Caco-2 (cell line): ENCODE measurements at regions of chr2 and their contacts with region 1.

Region 1: GRCh38 chr2:144924827-144925226 is 404.9 kb upstream of the ZEB2 start:
- DNase-seq: no peak
- H3K4me3 ChIP-seq: no peak overlapping the region
- H3K4me3 Mint-ChIP-seq: no peak overlapping the region
- H3K27ac Mint-ChIP-seq: no peak overlapping the region
- H3K4me1 ChIP-seq: no peaks in the 10 kb centered on the region
- H3K4me1 Mint-ChIP-seq: no peaks in the 10 kb centered on the region
- H3K27me3 ChIP-seq: no peaks in the 10 kb centered on the region
- H3K27me3 Mint-ChIP-seq: peaks cover 4% of the 10 kb centered on the region
- CTCF ChIP-seq: no peak

Region 2: GRCh38 chr2:143499061-143499460 is 1425.8 kb before region 1 on chr2:
- CTCF ChIA-PET with region 1: no interaction called
- POLR2A ChIA-PET with region 1: no interaction called
- intact Hi-C with region 1: no loop called
- DNase-seq: no peak
- H3K4me3 ChIP-seq: no peak overlapping the region
- H3K4me3 Mint-ChIP-seq: no peak overlapping the region
- H3K27ac Mint-ChIP-seq: no peak overlapping the region
- H3K4me1 ChIP-seq: no peaks in the 10 kb centered on the region
- H3K4me1 Mint-ChIP-seq: no peaks in the 10 kb centered on the region
- H3K27me3 ChIP-seq: no peaks in the 10 kb centered on the region
- H3K27me3 Mint-ChIP-seq: peaks cover 6% of the 10 kb centered on the region
- CTCF ChIP-seq: no peak

Region 3: GRCh38 chr2:145136702-145137101 is 211.9 kb after region 1 on chr2:
- CTCF ChIA-PET with region 1: no interaction called
- POLR2A ChIA-PET with region 1: no interaction called
- intact Hi-C with region 1: no loop called
- DNase-seq: no peak
- H3K4me3 ChIP-seq: no peak overlapping the region
- H3K4me3 Mint-ChIP-seq: no peak overlapping the region
- H3K27ac Mint-ChIP-seq: no peak overlapping the region
- H3K4me1 ChIP-seq: no peaks in the 10 kb centered on the region
- H3K4me1 Mint-ChIP-seq: no peaks in the 10 kb centered on the region
- H3K27me3 ChIP-seq: no peaks in the 10 kb centered on the region
- H3K27me3 Mint-ChIP-seq: no peaks in the 10 kb centered on the region
- CTCF ChIP-seq: no peak

Region 4: GRCh38 chr2:145379934-145380333 is 455.1 kb after region 1 on chr2:
- CTCF ChIA-PET with region 1: interaction called, 11 read pairs
- POLR2A ChIA-PET with region 1: no interaction called
- intact Hi-C with region 1: no loop called
- DNase-seq: no peak
- H3K4me3 ChIP-seq: no peak overlapping the region
- H3K4me3 Mint-ChIP-seq: no peak overlapping the region
- H3K27ac Mint-ChIP-seq: no peak overlapping the region
- H3K4me1 ChIP-seq: no peaks in the 10 kb centered on the region
- H3K4me1 Mint-ChIP-seq: no peaks in the 10 kb centered on the region
- H3K27me3 ChIP-seq: no peaks in the 10 kb centered on the region
- H3K27me3 Mint-ChIP-seq: no peaks in the 10 kb centered on the region
- CTCF ChIP-seq: no peak